Psoas muscle (tissue), 8 donors: ENCODE measurements at regions of chr2 and their contacts with region 1.

Region 1: GRCh38 chr2:135052042-135052876 is at the start of gene RAB3GAP1:
- DNase-seq: peak; percentile 69 to 81
- ATAC-seq: peak; percentile 88 to 95 (median 90)
- H3K4me3 ChIP-seq: peak within 1 kb of the TSS; percentile 85
- H3K27ac ChIP-seq: peak within 1 kb of the TSS; percentile 95
- H3K4me1 ChIP-seq: peaks cover 32% of the 10 kb centered on the region
- H3K27me3 ChIP-seq: no peaks in the 10 kb centered on the region
- CTCF ChIP-seq: no peak
- total RNA-seq, gene RAB3GAP1: 37.7 to 52.7 (median 42.9) TPM

Region 2: DNA sequence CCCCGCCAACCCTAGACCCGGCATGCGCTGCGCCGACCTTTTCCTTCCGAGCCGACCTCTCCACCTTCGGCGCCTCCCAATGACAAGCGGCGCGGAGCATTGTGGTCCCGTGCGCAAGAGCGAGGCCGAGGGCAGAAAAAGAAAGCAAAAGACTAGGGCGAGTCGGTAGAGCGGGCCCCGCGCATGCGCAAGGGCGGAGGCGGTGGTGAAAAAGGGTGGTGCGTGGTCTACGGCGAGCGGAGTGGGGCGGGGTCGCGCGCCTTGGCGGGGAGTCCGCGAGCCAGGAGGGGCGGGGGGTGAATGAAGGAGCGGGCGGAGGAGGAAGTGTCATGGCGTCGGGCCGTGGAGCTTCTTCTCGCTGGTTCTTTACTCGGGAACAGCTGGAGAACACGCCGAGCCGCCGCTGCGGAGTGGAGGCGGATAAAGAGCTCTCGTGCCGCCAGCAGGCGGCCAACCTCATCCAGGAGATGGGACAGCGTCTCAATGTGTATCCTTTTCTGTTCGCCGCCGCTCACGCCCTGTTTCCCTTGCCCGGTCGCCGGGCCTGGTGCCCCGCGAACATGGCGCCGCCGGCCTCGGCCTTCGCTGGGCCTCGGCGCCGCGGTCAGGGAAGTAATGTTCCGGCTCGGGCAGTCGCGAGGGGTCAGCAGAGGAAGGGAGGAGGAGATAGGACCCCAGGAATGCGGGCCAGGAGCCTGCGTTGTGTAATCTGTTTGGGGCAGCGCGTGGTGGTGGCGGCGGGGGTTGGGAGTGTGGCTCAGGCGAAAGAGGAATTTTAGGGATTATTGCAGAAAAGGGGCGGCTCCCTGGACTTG is 133.5 kb before region 1 on chr2 and contains the start of gene CCNT2:
- intact Hi-C with region 1: loop called in 1 of 2 experiments (anchors 1 kb)
- DNase-seq: peak; percentile 100
- ATAC-seq: peak; percentile 92 to 95 (median 93)
- H3K4me3 ChIP-seq: peak within 1 kb of the TSS; percentile 96
- H3K27ac ChIP-seq: peak within 1 kb of the TSS; percentile 100
- H3K4me1 ChIP-seq: peaks cover 38% of the 10 kb centered on the region
- H3K27me3 ChIP-seq: no peaks in the 10 kb centered on the region
- CTCF ChIP-seq: no peak
- total RNA-seq, gene CCNT2: 12.7 to 19.2 (median 15.2) TPM